Aorta (tissue), 5 donors: ENCODE measurements at regions of chr18 and their contacts with region 1.

Region 1: GRCh38 chr18:22933206-22933957 is at the start of gene RBBP8:
- DNase-seq: peak; percentile 90 to 95
- ATAC-seq: peak; percentile 97
- H3K4me3 ChIP-seq: peak within 1 kb of the TSS; percentile 75 to 83
- H3K27ac ChIP-seq: peak within 1 kb of the TSS; percentile 8 to 81
- H3K4me1 ChIP-seq: no peaks in the 10 kb centered on the region
- H3K27me3 ChIP-seq: no peaks in the 10 kb centered on the region
- total RNA-seq, gene RBBP8: 13.1 to 15.7 TPM

Region 2: GRCh38 chr18:22813648-22814328 is 119.6 kb before region 1 on chr18:
- intact Hi-C with region 1: loop called in 1 of 2 experiments (anchors 10 kb)
- DNase-seq: no peak
- ATAC-seq: no peak
- H3K4me3 ChIP-seq: no peak overlapping the region
- H3K27ac ChIP-seq: no peak overlapping the region
- H3K4me1 ChIP-seq: no peaks in the 10 kb centered on the region
- H3K27me3 ChIP-seq: no peaks in the 10 kb centered on the region

Region 3: DNA sequence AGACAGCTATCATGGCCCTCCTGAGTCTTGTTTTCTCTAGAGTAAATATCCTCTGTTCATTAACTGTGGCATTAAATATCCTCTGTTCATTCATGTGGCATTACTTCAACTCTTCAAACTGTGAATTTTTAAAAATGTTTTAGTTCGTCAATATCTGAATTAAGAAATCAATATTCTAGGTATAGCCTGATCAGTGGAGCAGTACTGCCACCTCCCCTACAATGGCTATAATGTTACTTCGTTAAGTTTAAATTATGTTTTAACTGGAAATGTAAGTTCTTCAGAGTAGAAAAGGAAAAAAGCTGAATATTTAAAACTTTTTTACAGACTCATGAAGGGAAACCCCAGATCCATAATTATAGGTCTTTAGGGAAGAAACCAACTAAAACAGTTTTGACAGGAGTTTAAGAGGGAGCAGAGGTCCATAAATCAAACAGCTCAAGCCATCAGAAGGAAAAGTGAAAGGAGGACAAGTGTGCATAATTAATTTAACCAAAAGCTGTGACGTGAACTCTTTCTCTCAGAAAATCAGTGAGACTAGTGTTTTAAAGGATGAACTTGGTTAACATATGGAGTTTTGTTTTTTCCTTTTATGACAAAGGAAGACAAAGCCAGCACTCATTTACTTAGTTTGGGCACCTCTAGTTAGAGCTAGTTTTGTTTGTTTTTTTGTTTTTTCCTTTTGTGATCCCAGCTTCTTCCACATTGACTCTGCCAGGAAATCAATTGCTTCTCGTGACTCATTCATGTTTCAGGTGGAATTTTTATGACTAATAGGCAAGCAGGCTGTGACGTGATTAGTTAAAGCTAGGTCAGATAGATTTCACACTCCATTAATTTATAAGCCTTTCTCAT is 44.7 kb after region 1 on chr18:
- intact Hi-C with region 1: loop called in 1 of 2 experiments (anchors 5 kb)
- DNase-seq: no peak
- ATAC-seq: no peak
- H3K4me3 ChIP-seq: no peak overlapping the region
- H3K27ac ChIP-seq: no peak overlapping the region
- H3K4me1 ChIP-seq: no peaks in the 10 kb centered on the region
- H3K27me3 ChIP-seq: no peaks in the 10 kb centered on the region

Region 4: GRCh38 chr18:23032030-23032582 is 98.7 kb after region 1 on chr18:
- intact Hi-C with region 1: no loop called
- DNase-seq: no peak
- ATAC-seq: no peak
- H3K4me3 ChIP-seq: no peak overlapping the region
- H3K27ac ChIP-seq: no peak overlapping the region
- H3K4me1 ChIP-seq: peaks cover 0 to 2% of the 10 kb centered on the region in 2 donors
- H3K27me3 ChIP-seq: no peaks in the 10 kb centered on the region

Region 5: DNA sequence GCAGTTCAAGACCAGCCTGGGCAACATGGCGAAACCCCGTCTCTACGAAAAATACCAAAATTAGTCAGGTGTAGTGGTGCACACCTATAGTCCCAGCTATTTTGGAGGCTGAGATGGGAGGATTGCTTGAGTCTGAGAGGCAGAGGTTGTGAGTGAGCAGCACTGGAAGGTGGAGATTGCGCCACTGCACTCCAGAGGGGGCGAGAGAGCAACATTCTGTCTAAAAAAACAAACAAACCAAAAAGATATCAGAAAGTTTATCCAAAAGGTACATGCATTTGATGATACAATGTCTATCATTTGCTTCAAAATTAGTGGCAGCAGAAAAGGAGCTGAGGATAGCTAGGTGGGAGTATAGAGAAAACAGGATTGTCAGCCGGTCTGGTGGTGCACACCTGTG is 162.1 kb after region 1 on chr18:
- intact Hi-C with region 1: no loop called
- DNase-seq: no peak
- ATAC-seq: no peak
- H3K4me3 ChIP-seq: no peak overlapping the region
- H3K27ac ChIP-seq: no peak overlapping the region
- H3K4me1 ChIP-seq: no peaks in the 10 kb centered on the region
- H3K27me3 ChIP-seq: no peaks in the 10 kb centered on the region

Region 6: GRCh38 chr18:23106580-23106979 is 173.2 kb after region 1 on chr18:
- intact Hi-C with region 1: loop called in 1 of 2 experiments (anchors 2 kb)
- DNase-seq: peak; percentile 63 to 81
- ATAC-seq: peak; percentile 70
- H3K4me3 ChIP-seq: no peak overlapping the region
- H3K27ac ChIP-seq: peak overlapping the region; percentile 82 to 94
- H3K4me1 ChIP-seq: peaks cover 0 to 5% of the 10 kb centered on the region in 2 donors
- H3K27me3 ChIP-seq: no peaks in the 10 kb centered on the region

Region 7: DNA sequence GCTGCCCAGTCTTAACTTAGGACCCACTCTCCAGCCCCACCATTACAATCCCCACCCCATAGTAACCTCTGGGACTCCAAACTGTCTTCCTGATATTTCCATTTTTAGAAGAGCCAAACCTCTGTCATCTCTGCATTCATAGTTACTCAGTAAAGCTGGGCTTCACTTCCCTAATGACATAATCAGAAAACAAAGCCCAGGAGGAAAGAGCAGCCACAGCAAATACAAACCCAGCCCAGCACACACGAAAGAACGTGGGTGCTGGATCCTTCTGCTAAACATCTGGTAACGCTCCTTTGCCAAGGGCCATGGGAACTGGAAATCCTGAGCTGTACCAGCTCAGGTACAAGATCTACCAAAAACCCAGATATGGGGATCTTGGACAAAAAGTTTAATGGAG is 482.9 kb after region 1 on chr18:
- intact Hi-C with region 1: loop called in 1 of 2 experiments (anchors 10 kb)
- DNase-seq: no peak
- ATAC-seq: no peak
- H3K4me3 ChIP-seq: no peak overlapping the region
- H3K27ac ChIP-seq: no peak overlapping the region
- H3K4me1 ChIP-seq: peaks cover 0 to 3% of the 10 kb centered on the region in 2 donors
- H3K27me3 ChIP-seq: no peaks in the 10 kb centered on the region